ENCODE measurements at regions of chr12 and their contacts with region 1.

Region 1: GRCh38 chr12:123533672-123534643 is at the start of gene RILPL1:
- DNase-seq: peak; percentile 29
- H3K4me3 ChIP-seq: peak within 1 kb of the TSS; percentile 52 to 91 (median 87)
- H3K27ac ChIP-seq: peak within 1 kb of the TSS; percentile 15
- H3K4me1 ChIP-seq: peaks cover 10% of the 10 kb centered on the region
- H3K27me3 ChIP-seq: no peaks in the 10 kb centered on the region
- CTCF ChIP-seq: peak in 1 of 2 donors; percentile 36
- total RNA-seq, gene RILPL1: 14.0 to 24.3 TPM

Region 2: GRCh38 chr12:123457980-123458783 is 75.8 kb before region 1 on chr12 and contains the start of gene SNRNP35:
- CTCF ChIA-PET with region 1: no interaction called
- dilution Hi-C with region 1: no loop called
- in situ Hi-C with region 1: no loop called
- intact Hi-C with region 1: loop called (anchors 5 kb)
- DNase-seq: peak; percentile 81
- H3K4me3 ChIP-seq: peak within 1 kb of the TSS; percentile 64 to 94 (median 73)
- H3K27ac ChIP-seq: peak within 1 kb of the TSS; percentile 91
- H3K4me1 ChIP-seq: no peaks in the 10 kb centered on the region
- H3K27me3 ChIP-seq: no peaks in the 10 kb centered on the region
- CTCF ChIP-seq: no peak
- total RNA-seq, gene SNRNP35: 9.7 to 22.8 TPM